Endothelial cell of umbilical vein (primary cell): ENCODE measurements at regions of chr2 and their contacts with region 1.

Region 1: GRCh38 chr2:27771548-27772335 is at the start of gene MRPL33:
- DNase-seq: peak; percentile 93
- H3K4me3 ChIP-seq: peak within 1 kb of the TSS; percentile 91 to 95 (median 95)
- H3K27ac ChIP-seq: peak within 1 kb of the TSS; percentile 90
- H3K4me1 ChIP-seq: peaks cover 25% of the 10 kb centered on the region
- H3K27me3 ChIP-seq: no peaks in the 10 kb centered on the region
- CTCF ChIP-seq: no peak
- POLR2A ChIP-seq: peak; percentile 90
- total RNA-seq, gene MRPL33: 96.7 and 97.4 TPM in 2 replicates

Region 2: GRCh38 chr2:27689424-27689823 is 82.3 kb before region 1 on chr2:
- CTCF ChIA-PET with region 1: no interaction called
- POLR2A ChIA-PET with region 1: no interaction called
- dilution Hi-C with region 1: no loop called
- intact Hi-C with region 1: no loop called
- DNase-seq: no peak
- H3K4me3 ChIP-seq: no peak overlapping the region
- H3K27ac ChIP-seq: no peak overlapping the region
- H3K4me1 ChIP-seq: no peaks in the 10 kb centered on the region
- H3K27me3 ChIP-seq: no peaks in the 10 kb centered on the region
- CTCF ChIP-seq: no peak
- POLR2A ChIP-seq: no peak

Region 3: GRCh38 chr2:27792759-27793158 is 21.0 kb after region 1 on chr2:
- CTCF ChIA-PET with region 1: interaction called, 10 read pairs
- POLR2A ChIA-PET with region 1: no interaction called
- dilution Hi-C with region 1: no loop called
- intact Hi-C with region 1: no loop called
- DNase-seq: peak; percentile 58
- H3K4me3 ChIP-seq: no peak overlapping the region
- H3K27ac ChIP-seq: peak overlapping the region; percentile 38
- H3K4me1 ChIP-seq: peaks cover 21% of the 10 kb centered on the region
- H3K27me3 ChIP-seq: no peaks in the 10 kb centered on the region
- CTCF ChIP-seq: no peak
- POLR2A ChIP-seq: no peak